ENCODE measurements at regions of chr10 and their contacts with region 1.

Region 1: GRCh38 chr10:27794157-27794556 is 48.5 kb upstream of the MKX start:
- DNase-seq: no peak
- H3K4me3 ChIP-seq: no peak overlapping the region
- H3K27ac ChIP-seq: no peak overlapping the region
- H3K4me1 ChIP-seq: no peaks in the 10 kb centered on the region
- H3K27me3 ChIP-seq: no peaks in the 10 kb centered on the region
- CTCF ChIP-seq: peak in 1 of 3 experiments; percentile 41; a peak in 1 of 4 replicates
- EP300 ChIP-seq: no peak
- POLR2A ChIP-seq: no peak
- RAD21 ChIP-seq: peak; percentile 34 to 38; a peak in 3 of 4 replicates

Region 2: DNA sequence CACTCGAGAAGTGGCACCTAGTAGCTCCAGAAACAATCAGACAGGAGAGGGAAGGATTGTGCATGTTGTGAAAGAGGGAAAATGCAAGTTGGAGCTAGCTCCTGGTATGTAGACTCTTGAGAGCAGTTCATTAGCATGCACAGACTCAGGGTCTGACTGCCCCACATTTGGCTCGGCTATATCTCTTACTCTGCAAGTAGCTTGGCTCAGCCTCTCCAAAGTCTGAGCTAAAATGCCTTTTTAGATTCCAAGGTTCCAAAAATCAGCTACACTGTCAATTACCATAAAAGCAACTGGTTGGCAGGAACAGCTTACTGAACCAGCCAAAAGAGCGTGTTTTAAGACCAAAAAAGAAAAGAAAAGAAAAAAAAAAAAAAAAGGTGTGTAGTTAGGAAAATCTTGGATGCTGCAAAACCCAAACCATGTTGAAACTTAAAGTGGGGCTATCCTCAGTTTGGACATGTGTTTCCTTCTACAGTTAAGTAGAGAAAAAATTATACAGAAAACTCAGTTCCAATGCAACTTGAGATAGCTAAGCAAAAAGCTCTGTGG is 114.1 kb before region 1 on chr10:
- CTCF ChIA-PET with region 1: no interaction called
- POLR2A ChIA-PET with region 1: no interaction called
- DNase-seq: no peak
- H3K4me3 ChIP-seq: no peak overlapping the region
- H3K27ac ChIP-seq: no peak overlapping the region
- H3K4me1 ChIP-seq: peaks cover 0 to 5% (median 0%) of the 10 kb centered on the region in 4 experiments; a peak in 1 of 7 replicates
- H3K27me3 ChIP-seq: no peaks in the 10 kb centered on the region
- CTCF ChIP-seq: no peak
- EP300 ChIP-seq: no peak
- POLR2A ChIP-seq: no peak
- RAD21 ChIP-seq: no peak

Region 3: GRCh38 chr10:27783660-27784059 is 10.5 kb before region 1 on chr10:
- CTCF ChIA-PET with region 1: interaction called, 13 read pairs
- POLR2A ChIA-PET with region 1: no interaction called
- DNase-seq: peak in 1 of 2 experiments; percentile 19
- H3K4me3 ChIP-seq: no peak overlapping the region
- H3K27ac ChIP-seq: no peak overlapping the region
- H3K4me1 ChIP-seq: peaks cover 0 to 3% (median 0%) of the 10 kb centered on the region in 4 experiments; a peak in 1 of 7 replicates
- H3K27me3 ChIP-seq: no peaks in the 10 kb centered on the region
- CTCF ChIP-seq: peak; percentile 11 to 76 (median 73)
- EP300 ChIP-seq: no peak
- POLR2A ChIP-seq: no peak
- RAD21 ChIP-seq: peak; percentile 89 to 93

Region 4: DNA sequence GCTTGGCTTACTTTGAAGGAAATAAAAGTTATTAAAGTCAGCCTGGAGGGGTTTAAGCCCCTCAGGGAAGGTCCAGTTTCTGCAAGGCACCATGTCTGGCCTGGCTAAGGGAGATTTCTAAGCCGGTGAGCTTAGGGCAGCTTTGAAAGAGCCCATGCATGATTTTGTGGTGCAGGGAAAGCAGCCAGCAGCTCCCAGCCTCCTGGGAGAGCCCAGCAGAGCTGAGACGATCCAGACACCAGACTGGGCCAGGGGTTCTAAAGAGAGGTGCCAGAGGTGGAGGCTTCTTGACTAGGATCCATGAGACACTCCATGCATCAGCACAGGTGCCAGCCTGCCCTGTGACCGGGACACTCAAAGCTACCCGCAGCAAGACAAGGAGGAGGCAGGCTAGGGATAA is 11.0 kb after region 1 on chr10:
- CTCF ChIA-PET with region 1: interaction called, 10 read pairs
- POLR2A ChIA-PET with region 1: no interaction called
- DNase-seq: no peak
- H3K4me3 ChIP-seq: no peak overlapping the region
- H3K27ac ChIP-seq: no peak overlapping the region
- H3K4me1 ChIP-seq: no peaks in the 10 kb centered on the region
- H3K27me3 ChIP-seq: no peaks in the 10 kb centered on the region
- CTCF ChIP-seq: no peak
- EP300 ChIP-seq: no peak
- POLR2A ChIP-seq: no peak
- RAD21 ChIP-seq: no peak